Transverse colon (tissue), 4 donors: ENCODE measurements at regions of chr3 and their contacts with region 1.

Region 1: GRCh38 chr3:4712143-4712542 is 219.0 kb downstream of the ITPR1 start:
- DNase-seq: peak; percentile 71
- H3K4me3 ChIP-seq: no peak overlapping the region
- H3K27ac ChIP-seq: peak overlapping the region in 1 of 4 donors; percentile 18
- H3K4me1 ChIP-seq: peaks cover 4 to 10% (median 8%) of the 10 kb centered on the region in 4 donors
- H3K27me3 ChIP-seq: no peaks in the 10 kb centered on the region
- CTCF ChIP-seq: no peak
- EP300 ChIP-seq: no peak
- POLR2A ChIP-seq: no peak

Region 2: DNA sequence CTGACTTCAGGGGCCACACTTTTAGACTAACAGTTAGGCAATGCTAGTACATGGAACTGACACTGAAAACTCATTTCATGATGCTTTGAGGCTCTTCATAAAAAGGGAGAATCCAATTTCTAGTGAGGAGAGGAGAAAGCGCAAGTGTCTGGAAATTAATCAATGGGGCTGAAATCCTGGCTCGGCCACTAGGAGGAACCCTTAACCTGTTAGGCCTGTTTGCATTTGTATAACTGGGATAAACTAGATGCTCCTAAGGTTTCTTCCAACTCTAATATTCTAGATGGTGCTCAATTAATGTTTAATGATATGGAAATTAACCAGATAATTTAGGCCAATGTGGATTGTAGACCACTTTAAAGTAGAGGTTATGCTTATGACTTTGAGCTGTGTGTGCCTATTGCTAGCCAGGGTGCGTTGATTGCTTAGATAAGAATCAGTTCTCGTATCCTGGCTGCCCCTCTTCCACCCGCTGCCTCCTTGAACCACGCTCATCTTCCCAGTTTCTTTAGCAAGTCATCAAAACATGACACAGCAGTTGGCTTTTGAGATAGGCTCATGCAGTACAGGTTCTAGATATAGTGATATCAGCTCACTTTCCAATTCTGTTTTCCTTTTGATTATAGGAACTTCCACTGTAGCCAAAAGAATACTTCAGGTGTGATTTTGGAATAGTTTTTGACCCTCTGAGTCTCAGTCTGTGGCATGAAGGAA is 1515.8 kb before region 1 on chr3:
- in situ Hi-C with region 1: no loop called
- intact Hi-C with region 1: no loop called
- DNase-seq: no peak
- H3K4me3 ChIP-seq: no peak overlapping the region
- H3K27ac ChIP-seq: no peak overlapping the region
- H3K4me1 ChIP-seq: no peaks in the 10 kb centered on the region
- H3K27me3 ChIP-seq: no peaks in the 10 kb centered on the region
- CTCF ChIP-seq: peak in 4 of 5 experiments; percentile 7 to 32 (median 28)
- EP300 ChIP-seq: no peak
- POLR2A ChIP-seq: no peak

Region 3: DNA sequence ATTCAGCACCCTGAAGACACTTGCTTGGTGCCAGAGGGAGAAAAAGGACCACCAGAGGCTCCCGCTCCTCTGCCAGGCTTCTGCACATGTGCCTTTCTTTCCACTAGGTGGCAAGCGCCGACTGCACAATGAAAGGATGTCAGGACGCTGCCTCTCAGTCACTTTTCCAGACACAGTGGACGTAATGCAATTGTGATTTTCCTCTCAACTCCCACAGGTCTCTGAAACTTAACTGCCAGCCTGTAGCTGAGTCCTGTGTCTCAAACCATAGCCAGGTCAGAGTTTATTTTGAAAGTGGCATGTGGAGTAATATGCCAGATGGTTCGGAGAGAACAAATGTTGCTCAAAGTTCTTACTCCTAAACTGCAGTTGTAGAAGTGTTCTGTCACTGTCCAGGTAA is 56.1 kb before region 1 on chr3:
- in situ Hi-C with region 1: no loop called
- intact Hi-C with region 1: no loop called
- DNase-seq: peak; percentile 30
- H3K4me3 ChIP-seq: no peak overlapping the region
- H3K27ac ChIP-seq: peak overlapping the region in 1 of 4 donors; percentile 5
- H3K4me1 ChIP-seq: no peaks in the 10 kb centered on the region
- H3K27me3 ChIP-seq: no peaks in the 10 kb centered on the region
- CTCF ChIP-seq: peak; percentile 52 to 72 (median 66)
- EP300 ChIP-seq: no peak
- POLR2A ChIP-seq: no peak

Region 4: DNA sequence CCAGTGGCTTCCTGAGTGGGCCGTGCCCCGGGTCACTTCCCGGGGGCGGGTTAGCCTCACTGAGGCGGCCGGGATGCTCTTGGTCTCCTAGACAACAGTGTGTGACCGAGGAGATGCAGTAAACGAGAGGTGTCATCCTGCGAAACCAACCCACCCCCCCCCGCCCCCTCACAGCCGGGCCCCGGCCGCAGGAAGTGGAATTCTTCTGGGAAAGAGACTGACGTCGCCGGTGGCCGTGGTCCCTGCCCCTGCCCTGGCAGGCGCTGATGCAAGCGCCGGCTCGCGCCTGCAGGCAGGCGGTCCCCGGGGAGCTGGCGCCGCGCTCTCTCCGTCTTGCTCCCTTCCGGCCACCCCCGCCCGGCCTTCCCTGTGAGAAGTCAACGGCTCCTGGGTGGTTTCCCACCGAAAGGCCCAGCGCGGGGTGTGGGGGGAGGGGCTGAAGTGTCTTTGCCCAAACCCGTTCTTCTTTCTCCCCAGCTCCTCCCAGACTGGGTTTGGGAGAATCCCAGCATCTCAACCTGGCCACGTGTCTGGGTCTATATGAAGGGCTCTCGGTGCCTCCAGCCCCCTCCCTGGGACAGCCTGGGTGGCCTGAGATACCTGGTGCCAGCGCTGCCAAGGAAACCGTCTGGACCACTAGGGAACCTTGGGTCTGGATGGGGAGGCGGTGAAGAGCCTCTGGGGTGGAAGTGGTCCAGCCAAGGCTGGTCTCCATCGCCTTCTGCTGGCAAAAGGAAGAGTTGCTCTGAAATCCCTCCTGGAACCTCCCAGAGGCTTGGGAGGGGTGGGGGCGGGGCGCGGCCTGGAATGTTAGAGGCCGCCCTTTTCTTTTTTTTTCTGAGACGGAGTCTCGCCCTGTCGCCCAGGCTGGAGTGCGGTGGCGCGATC is 314.4 kb after region 1 on chr3:
- in situ Hi-C with region 1: no loop called
- intact Hi-C with region 1: loop called (anchors 2 kb)
- DNase-seq: peak; percentile 86
- H3K4me3 ChIP-seq: peak overlapping the region; percentile 41 to 50 (median 46)
- H3K27ac ChIP-seq: peak overlapping the region; percentile 72 to 84 (median 80)
- H3K4me1 ChIP-seq: peaks cover 0 to 12% (median 6%) of the 10 kb centered on the region in 4 donors
- H3K27me3 ChIP-seq: no peaks in the 10 kb centered on the region
- CTCF ChIP-seq: peak; percentile 65 to 85 (median 71)
- EP300 ChIP-seq: no peak
- POLR2A ChIP-seq: peak; percentile 18

Region 5: GRCh38 chr3:5057857-5058324 is 345.7 kb after region 1 on chr3:
- in situ Hi-C with region 1: loop called (anchors 5 to 25 kb)
- intact Hi-C with region 1: no loop called
- DNase-seq: peak; percentile 84
- H3K4me3 ChIP-seq: no peak overlapping the region
- H3K27ac ChIP-seq: no peak overlapping the region
- H3K4me1 ChIP-seq: peaks cover 0 to 20% (median 4%) of the 10 kb centered on the region in 4 donors
- H3K27me3 ChIP-seq: no peaks in the 10 kb centered on the region
- CTCF ChIP-seq: peak; percentile 70 to 88 (median 76)
- EP300 ChIP-seq: no peak
- POLR2A ChIP-seq: no peak